T-cell (primary cell): ENCODE measurements at regions of chr2 and their contacts with region 1.

Region 1: GRCh38 chr2:168365094-168365621 is 90.9 kb upstream of the CERS6 start:
- DNase-seq: no peak
- ATAC-seq: no peak
- H3K4me3 ChIP-seq: no peak overlapping the region
- H3K4me3 Mint-ChIP-seq: no peak overlapping the region
- H3K27ac ChIP-seq: no peak overlapping the region
- H3K27ac Mint-ChIP-seq: no peak overlapping the region
- H3K4me1 ChIP-seq: no peaks in the 10 kb centered on the region
- H3K4me1 Mint-ChIP-seq: no peaks in the 10 kb centered on the region
- H3K27me3 ChIP-seq: no peaks in the 10 kb centered on the region
- H3K27me3 Mint-ChIP-seq: no peaks in the 10 kb centered on the region

Region 2: GRCh38 chr2:168424112-168424951 is 59.2 kb after region 1 on chr2:
- CTCF ChIA-PET with region 1: no interaction called
- POLR2A ChIA-PET with region 1: no interaction called
- DNase-seq: no peak
- ATAC-seq: no peak
- H3K4me3 ChIP-seq: no peak overlapping the region
- H3K4me3 Mint-ChIP-seq: no peak overlapping the region
- H3K27ac ChIP-seq: no peak overlapping the region
- H3K27ac Mint-ChIP-seq: no peak overlapping the region
- H3K4me1 ChIP-seq: peaks cover 0 to 4% of the 10 kb centered on the region in 2 experiments
- H3K4me1 Mint-ChIP-seq: peaks cover 19 to 40% (median 21%) of the 10 kb centered on the region in 3 donors
- H3K27me3 ChIP-seq: no peaks in the 10 kb centered on the region
- H3K27me3 Mint-ChIP-seq: no peaks in the 10 kb centered on the region

Region 3: GRCh38 chr2:169670215-169670651 is 1305.1 kb after region 1 on chr2:
- CTCF ChIA-PET with region 1: no interaction called
- POLR2A ChIA-PET with region 1: interaction called in 1 of 2 experiments, 12 read pairs
- DNase-seq: no peak
- ATAC-seq: no peak
- H3K4me3 ChIP-seq: no peak overlapping the region
- H3K4me3 Mint-ChIP-seq: no peak overlapping the region
- H3K27ac ChIP-seq: no peak overlapping the region
- H3K27ac Mint-ChIP-seq: no peak overlapping the region
- H3K4me1 ChIP-seq: no peaks in the 10 kb centered on the region
- H3K4me1 Mint-ChIP-seq: no peaks in the 10 kb centered on the region
- H3K27me3 ChIP-seq: peaks cover 0 to 8% of the 10 kb centered on the region in 2 experiments
- H3K27me3 Mint-ChIP-seq: peaks cover 0 to 4% of the 10 kb centered on the region in 2 donors